B cell (primary cell): ENCODE measurements at regions of chrX and their contacts with region 1.

Region 1: GRCh38 chrX:41333744-41334259 is at the start of gene DDX3X:
- DNase-seq: peak; percentile 93
- ATAC-seq: peak; percentile 59
- H3K4me3 ChIP-seq: peak within 1 kb of the TSS; percentile 81 to 100 (median 100)
- H3K4me3 Mint-ChIP-seq: peak within 1 kb of the TSS; percentile 96
- H3K27ac ChIP-seq: peak within 1 kb of the TSS; percentile 99 to 100
- H3K27ac Mint-ChIP-seq: peak within 1 kb of the TSS; percentile 99
- H3K4me1 ChIP-seq: peaks cover 27 to 47% of the 10 kb centered on the region in 2 donors
- H3K4me1 Mint-ChIP-seq: peaks cover 35% of the 10 kb centered on the region
- H3K27me3 ChIP-seq: no peaks in the 10 kb centered on the region
- H3K27me3 Mint-ChIP-seq: no peaks in the 10 kb centered on the region
- CTCF ChIP-seq: peak; percentile 9
- total RNA-seq, gene DDX3X: 272 and 289 TPM in 2 replicates

Region 2: DNA sequence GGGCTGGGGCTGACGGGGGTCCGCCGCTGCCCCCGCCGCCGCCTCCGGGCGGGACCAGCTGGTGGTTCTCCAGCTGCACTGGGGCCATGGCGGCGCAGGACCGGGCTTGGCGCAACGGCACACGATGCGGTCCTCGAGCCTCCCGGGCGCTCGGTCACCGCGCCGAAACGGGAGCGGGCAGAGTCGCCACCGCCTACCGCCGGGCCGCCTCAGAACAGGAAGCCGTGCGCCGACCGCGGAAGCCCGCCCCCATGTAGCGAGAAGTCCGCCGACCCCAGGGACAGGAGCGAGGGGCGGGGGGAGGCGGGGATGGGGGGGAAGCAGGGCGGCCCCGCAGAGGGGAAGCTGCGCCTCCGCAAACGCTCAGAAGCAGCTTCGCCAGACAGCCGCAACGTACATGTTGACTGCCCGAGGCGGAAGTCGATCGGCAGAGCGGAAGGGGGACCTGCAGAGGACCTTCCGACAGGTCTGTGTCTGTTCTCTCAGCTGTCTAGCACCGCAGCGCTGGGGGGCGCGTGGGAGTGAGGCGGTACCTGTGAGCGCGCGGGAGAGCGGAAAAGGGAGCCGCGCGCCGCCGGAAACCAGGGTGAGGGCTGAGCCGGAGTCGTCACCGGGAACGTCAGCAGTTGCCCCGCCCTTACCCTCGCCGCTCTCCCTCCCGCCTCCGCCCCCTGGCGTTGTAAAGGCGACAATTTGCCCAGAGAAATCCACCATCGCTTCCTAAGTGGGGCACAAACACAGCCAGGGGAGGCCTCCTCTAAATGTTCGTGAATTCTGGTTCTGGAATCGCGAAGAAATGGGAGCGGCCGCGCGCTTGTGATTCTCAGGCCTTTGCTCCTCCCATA is 598.3 kb before region 1 on chrX and contains the start of gene MED14:
- CTCF ChIA-PET with region 1: no interaction called
- POLR2A ChIA-PET with region 1: no interaction called
- intact Hi-C with region 1: loop called (anchors 5 kb)
- DNase-seq: peak; percentile 94
- ATAC-seq: peak; percentile 84
- H3K4me3 ChIP-seq: peak within 1 kb of the TSS; percentile 64 to 93 (median 82)
- H3K4me3 Mint-ChIP-seq: peak within 1 kb of the TSS; percentile 91
- H3K27ac ChIP-seq: peak within 1 kb of the TSS; percentile 91 to 98
- H3K27ac Mint-ChIP-seq: peak within 1 kb of the TSS; percentile 98
- H3K4me1 ChIP-seq: peaks cover 25 to 31% of the 10 kb centered on the region in 2 donors
- H3K4me1 Mint-ChIP-seq: peaks cover 34% of the 10 kb centered on the region
- H3K27me3 ChIP-seq: peaks cover 0 to 2% (median 0%) of the 10 kb centered on the region in 4 experiments
- H3K27me3 Mint-ChIP-seq: no peaks in the 10 kb centered on the region
- CTCF ChIP-seq: peak; percentile 56
- total RNA-seq, gene MED14: 63.5 and 67.1 TPM in 2 replicates

Region 3: GRCh38 chrX:41180194-41180908 is 153.5 kb before region 1 on chrX:
- CTCF ChIA-PET with region 1: no interaction called
- POLR2A ChIA-PET with region 1: interaction called, 3 read pairs
- intact Hi-C with region 1: loop called (anchors 5 kb)
- DNase-seq: peak; percentile 69
- ATAC-seq: peak; percentile 68
- H3K4me3 ChIP-seq: peak overlapping the region in 1 of 5 experiments; percentile 15
- H3K4me3 Mint-ChIP-seq: peak overlapping the region; percentile 56
- H3K27ac ChIP-seq: peak overlapping the region; percentile 74 to 86
- H3K27ac Mint-ChIP-seq: peak overlapping the region; percentile 73
- H3K4me1 ChIP-seq: peaks cover 27 to 30% of the 10 kb centered on the region in 2 donors
- H3K4me1 Mint-ChIP-seq: peaks cover 43% of the 10 kb centered on the region
- H3K27me3 ChIP-seq: no peaks in the 10 kb centered on the region
- H3K27me3 Mint-ChIP-seq: no peaks in the 10 kb centered on the region
- CTCF ChIP-seq: peak; percentile 71

Region 4: GRCh38 chrX:41275661-41276609 is 57.9 kb before region 1 on chrX:
- CTCF ChIA-PET with region 1: no interaction called
- POLR2A ChIA-PET with region 1: interaction called, 8 read pairs
- intact Hi-C with region 1: loop called (anchors 2 kb)
- DNase-seq: peak; percentile 47
- ATAC-seq: peak; percentile 64
- H3K4me3 ChIP-seq: peak overlapping the region; percentile 42 to 65 (median 44)
- H3K4me3 Mint-ChIP-seq: peak overlapping the region; percentile 85
- H3K27ac ChIP-seq: peak overlapping the region in 1 of 2 donors; percentile 52
- H3K27ac Mint-ChIP-seq: peak overlapping the region; percentile 68
- H3K4me1 ChIP-seq: peaks cover 12 to 17% of the 10 kb centered on the region in 2 donors
- H3K4me1 Mint-ChIP-seq: peaks cover 11% of the 10 kb centered on the region
- H3K27me3 ChIP-seq: no peaks in the 10 kb centered on the region
- H3K27me3 Mint-ChIP-seq: no peaks in the 10 kb centered on the region
- CTCF ChIP-seq: no peak

Region 5: DNA sequence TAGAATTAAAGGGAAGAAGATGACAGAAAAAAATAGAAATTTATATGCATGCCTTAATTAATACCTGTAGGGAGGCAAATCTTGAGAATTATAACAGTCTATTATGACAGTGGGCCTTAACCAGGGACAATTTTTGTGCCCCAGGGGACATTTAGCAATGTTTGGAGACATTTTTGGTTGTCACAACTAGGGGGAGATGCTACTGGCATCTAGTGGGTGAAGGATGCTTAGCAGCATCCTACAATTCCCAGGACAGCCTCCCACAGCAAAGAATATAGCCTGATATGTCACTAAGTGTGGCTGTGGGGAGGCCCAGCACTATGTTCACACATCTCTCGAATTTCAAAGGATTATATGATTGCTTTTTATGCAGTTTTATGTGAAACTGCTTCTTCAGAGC is 400.7 kb after region 1 on chrX:
- CTCF ChIA-PET with region 1: no interaction called
- POLR2A ChIA-PET with region 1: no interaction called
- intact Hi-C with region 1: loop called (anchors 10 kb)
- DNase-seq: peak; percentile 46
- ATAC-seq: no peak
- H3K4me3 ChIP-seq: no peak overlapping the region
- H3K4me3 Mint-ChIP-seq: peak overlapping the region; percentile 82
- H3K27ac ChIP-seq: peak overlapping the region in 1 of 2 donors; percentile 58
- H3K27ac Mint-ChIP-seq: peak overlapping the region; percentile 86
- H3K4me1 ChIP-seq: peaks cover 23 to 24% of the 10 kb centered on the region in 2 donors
- H3K4me1 Mint-ChIP-seq: peaks cover 41% of the 10 kb centered on the region
- H3K27me3 ChIP-seq: no peaks in the 10 kb centered on the region
- H3K27me3 Mint-ChIP-seq: no peaks in the 10 kb centered on the region
- CTCF ChIP-seq: peak; percentile 31